ENCODE measurements at regions of chr2 and their contacts with region 1.

Region 1: GRCh38 chr2:38653715-38654527 is 12.0 kb upstream of the GALM start:
- DNase-seq: peak; percentile 89
- H3K4me3 Mint-ChIP-seq: peak overlapping the region; percentile 63
- H3K27ac Mint-ChIP-seq: peak overlapping the region; percentile 91
- H3K4me1 Mint-ChIP-seq: peaks cover 68% of the 10 kb centered on the region
- H3K27me3 Mint-ChIP-seq: no peaks in the 10 kb centered on the region

Region 2: DNA sequence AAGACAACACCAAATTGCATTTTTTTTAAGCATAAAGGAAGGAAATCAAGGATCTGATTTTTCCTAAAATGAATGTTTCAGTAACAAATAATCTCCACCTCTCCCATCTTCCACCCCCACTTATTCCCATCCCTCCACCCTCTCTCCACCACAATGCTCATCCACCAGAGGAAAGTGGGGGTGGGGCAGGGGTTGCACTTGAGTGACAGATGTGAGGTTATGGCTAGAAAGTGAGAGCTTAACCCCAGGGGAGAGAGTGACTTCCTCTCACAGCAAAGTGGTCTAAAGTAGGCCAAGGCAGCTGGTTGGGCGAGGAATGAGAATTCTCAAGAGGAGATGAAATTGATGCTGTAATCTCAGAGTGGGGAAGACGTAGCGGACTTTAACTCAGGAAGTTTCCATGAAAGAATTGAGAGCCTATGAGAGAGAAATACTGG is 155.9 kb before region 1 on chr2:
- CTCF ChIA-PET with region 1: no interaction called
- POLR2A ChIA-PET with region 1: no interaction called
- intact Hi-C with region 1: no loop called
- DNase-seq: no peak
- H3K4me3 Mint-ChIP-seq: no peak overlapping the region
- H3K27ac Mint-ChIP-seq: no peak overlapping the region
- H3K4me1 Mint-ChIP-seq: no peaks in the 10 kb centered on the region
- H3K27me3 Mint-ChIP-seq: peaks cover 12% of the 10 kb centered on the region

Region 3: GRCh38 chr2:38560092-38560491 is 93.8 kb before region 1 on chr2:
- CTCF ChIA-PET with region 1: no interaction called
- POLR2A ChIA-PET with region 1: no interaction called
- intact Hi-C with region 1: no loop called
- DNase-seq: no peak
- H3K4me3 Mint-ChIP-seq: no peak overlapping the region
- H3K27ac Mint-ChIP-seq: peak overlapping the region; percentile 42
- H3K4me1 Mint-ChIP-seq: no peaks in the 10 kb centered on the region
- H3K27me3 Mint-ChIP-seq: no peaks in the 10 kb centered on the region

Region 4: GRCh38 chr2:38610851-38611801 is 42.8 kb before region 1 on chr2:
- CTCF ChIA-PET with region 1: interaction called, 43 read pairs
- POLR2A ChIA-PET with region 1: interaction called, 24 read pairs
- intact Hi-C with region 1: loop called (anchors 1 kb)
- DNase-seq: peak; percentile 57
- H3K4me3 Mint-ChIP-seq: peak overlapping the region; percentile 10
- H3K27ac Mint-ChIP-seq: peak overlapping the region; percentile 31
- H3K4me1 Mint-ChIP-seq: peaks cover 69% of the 10 kb centered on the region
- H3K27me3 Mint-ChIP-seq: no peaks in the 10 kb centered on the region

Region 5: GRCh38 chr2:38690499-38691294 is 36.8 kb after region 1 on chr2:
- CTCF ChIA-PET with region 1: no interaction called
- POLR2A ChIA-PET with region 1: no interaction called
- intact Hi-C with region 1: loop called (anchors 1 kb)
- DNase-seq: peak; percentile 50
- H3K4me3 Mint-ChIP-seq: no peak overlapping the region
- H3K27ac Mint-ChIP-seq: peak overlapping the region; percentile 88
- H3K4me1 Mint-ChIP-seq: peaks cover 78% of the 10 kb centered on the region
- H3K27me3 Mint-ChIP-seq: no peaks in the 10 kb centered on the region

Region 6: DNA sequence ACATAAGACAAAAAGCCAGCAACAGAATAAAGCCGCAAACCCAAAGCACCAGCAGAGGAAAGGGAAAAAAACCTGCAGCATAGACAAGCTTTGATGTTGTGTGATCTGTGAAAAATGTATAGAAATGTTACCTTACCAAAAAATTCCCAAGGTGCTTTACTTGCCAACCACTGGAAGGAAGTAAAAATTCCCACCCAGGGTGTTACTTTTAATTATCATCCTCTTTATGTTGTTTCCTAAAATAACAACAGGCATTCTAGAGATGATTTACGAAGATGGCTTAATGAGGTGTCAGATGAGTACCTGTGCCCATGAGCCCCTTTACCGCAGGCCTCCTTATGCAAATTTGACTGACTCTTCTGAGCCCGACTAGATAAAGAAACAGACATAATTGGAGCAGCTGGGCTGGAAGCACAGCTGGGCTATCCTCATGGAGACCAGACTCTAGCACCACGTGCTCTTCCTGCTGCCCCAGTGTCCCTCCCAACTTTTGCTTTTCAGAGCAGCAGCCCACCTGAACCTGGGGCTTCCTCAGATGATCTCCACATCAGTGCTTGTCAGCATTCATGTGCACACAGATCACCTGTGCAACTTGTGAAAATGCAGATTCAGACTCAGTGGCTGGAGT is 55.8 kb after region 1 on chr2:
- CTCF ChIA-PET with region 1: no interaction called
- POLR2A ChIA-PET with region 1: no interaction called
- intact Hi-C with region 1: loop called (anchors 1 kb)
- DNase-seq: peak; percentile 72
- H3K4me3 Mint-ChIP-seq: peak overlapping the region; percentile 52
- H3K27ac Mint-ChIP-seq: peak overlapping the region; percentile 90
- H3K4me1 Mint-ChIP-seq: peaks cover 74% of the 10 kb centered on the region
- H3K27me3 Mint-ChIP-seq: no peaks in the 10 kb centered on the region

Region 7: DNA sequence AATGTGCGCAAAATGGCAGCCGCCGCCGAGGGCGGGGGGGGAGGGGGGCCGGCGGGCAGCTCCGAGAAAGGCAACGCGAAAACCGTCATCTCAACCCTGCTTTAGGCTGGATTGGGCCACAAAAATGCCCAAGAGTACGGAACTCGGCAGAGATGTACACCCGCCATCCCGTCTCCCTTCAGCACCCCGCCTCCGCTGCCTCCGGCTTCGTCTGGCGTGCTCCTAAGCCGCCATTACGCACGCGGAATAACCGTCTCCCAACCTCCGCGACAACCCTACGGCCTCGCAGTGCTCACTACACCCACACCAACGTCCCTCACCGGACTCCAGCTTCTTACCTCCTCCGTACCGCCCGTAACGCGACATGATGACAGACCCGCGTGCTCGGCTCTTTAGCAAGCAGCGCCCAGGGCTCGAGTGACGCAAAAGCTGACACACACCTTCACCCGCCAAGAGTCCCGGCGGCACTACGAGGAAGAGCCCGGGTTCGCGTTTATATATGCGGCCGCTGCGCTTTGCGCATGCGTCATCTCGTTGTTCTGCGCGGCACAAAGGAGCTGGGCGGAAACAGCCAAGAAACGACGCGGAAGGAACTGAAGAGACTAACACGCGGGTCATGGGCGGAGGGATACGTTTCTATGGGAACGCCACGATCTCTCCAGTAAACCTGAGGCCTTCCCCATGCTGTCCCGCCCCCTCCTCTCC is 97.1 kb after region 1 on chr2 and contains the start of gene SRSF7:
- CTCF ChIA-PET with region 1: no interaction called
- POLR2A ChIA-PET with region 1: interaction called, 21 read pairs
- intact Hi-C with region 1: no loop called
- DNase-seq: peak; percentile 98
- H3K4me3 Mint-ChIP-seq: peak within 1 kb of the TSS; percentile 95
- H3K27ac Mint-ChIP-seq: peak within 1 kb of the TSS; percentile 100
- H3K4me1 Mint-ChIP-seq: peaks cover 53% of the 10 kb centered on the region
- H3K27me3 Mint-ChIP-seq: peaks cover 6% of the 10 kb centered on the region
- total RNA-seq, gene SRSF7: 276 to 279 TPM

Measured in activated CD4-positive, alpha-beta memory T cell treated with anti-CD3 and anti-CD28 coated beads for 36 hours (primary cell).